ENCODE measurements at regions of chr9 and their contacts with region 1.

Region 1: GRCh38 chr9:126261584-126262356 is 64.9 kb upstream of the MVB12B start:
- DNase-seq: no peak
- ATAC-seq: no peak
- H3K4me3 ChIP-seq: no peak overlapping the region
- H3K27ac ChIP-seq: no peak overlapping the region
- H3K4me1 ChIP-seq: no peaks in the 10 kb centered on the region
- H3K27me3 ChIP-seq: peaks cover 0 to 87% (median 41%) of the 10 kb centered on the region in 7 donors
- CTCF ChIP-seq: no peak

Region 2: DNA sequence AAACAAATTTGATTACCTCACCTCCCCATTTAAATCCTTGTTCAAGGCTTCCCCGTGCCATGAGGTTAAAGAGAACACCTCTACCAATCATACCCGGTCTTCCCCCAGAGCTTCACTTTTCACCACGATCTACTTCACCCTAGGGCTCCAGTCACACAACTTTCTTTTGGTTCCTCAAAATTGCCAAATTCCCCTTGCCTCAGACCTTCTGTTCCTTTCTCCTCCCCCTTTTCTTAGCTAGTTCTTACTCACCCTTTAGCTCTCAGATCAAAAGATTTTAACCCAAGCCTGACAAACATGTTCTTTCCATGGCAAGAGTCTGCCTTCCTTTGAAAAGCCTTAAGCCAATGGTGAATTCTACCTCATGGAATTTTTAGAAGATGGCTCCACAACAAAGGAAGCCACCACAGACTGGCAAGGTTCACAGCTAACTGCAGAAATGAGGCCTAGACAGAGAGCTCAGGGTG is 611.5 kb before region 1 on chr9:
- intact Hi-C with region 1: loop called in 1 of 10 experiments (anchors 10 kb)
- DNase-seq: no peak
- ATAC-seq: peak in 5 of 8 donors; percentile 41 to 61 (median 51)
- H3K4me3 ChIP-seq: no peak overlapping the region
- H3K27ac ChIP-seq: peak overlapping the region in 3 of 10 donors; percentile 23 to 85 (median 35)
- H3K4me1 ChIP-seq: peaks cover 0 to 78% (median 36%) of the 10 kb centered on the region in 9 donors
- H3K27me3 ChIP-seq: no peaks in the 10 kb centered on the region
- CTCF ChIP-seq: no peak

Region 3: DNA sequence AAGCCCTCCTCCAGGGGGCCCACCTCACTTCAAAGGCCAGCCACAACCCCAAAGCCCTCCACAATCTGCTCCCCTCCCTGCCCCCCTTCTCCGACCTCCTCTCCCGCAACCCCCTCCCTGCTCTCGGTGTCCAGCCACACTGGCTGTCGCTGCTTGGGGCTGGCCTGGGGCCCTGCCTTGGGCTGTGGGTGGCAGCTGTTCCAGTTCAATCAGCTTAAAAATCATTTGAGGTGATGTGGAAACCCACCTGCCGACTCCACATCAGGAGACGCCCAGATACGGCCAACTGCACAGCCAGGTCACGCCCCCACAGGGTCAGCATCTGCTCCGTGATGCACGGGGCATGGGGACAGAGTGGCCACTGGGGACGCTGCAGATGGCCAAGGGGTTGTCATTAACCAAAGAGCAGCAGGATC is 42.1 kb before region 1 on chr9:
- intact Hi-C with region 1: loop called in 1 of 10 experiments (anchors 2 kb)
- DNase-seq: no peak
- ATAC-seq: no peak
- H3K4me3 ChIP-seq: no peak overlapping the region
- H3K27ac ChIP-seq: no peak overlapping the region
- H3K4me1 ChIP-seq: peaks cover 0 to 5% (median 0%) of the 10 kb centered on the region in 9 donors
- H3K27me3 ChIP-seq: peaks cover 12 to 69% (median 66%) of the 10 kb centered on the region in 7 donors
- CTCF ChIP-seq: no peak